ENCODE measurements at regions of chr2 and their contacts with region 1.

Region 1: GRCh38 chr2:237421542-237422116 is 7.7 kb upstream of the COL6A3 start:
- DNase-seq: peak; percentile 93
- H3K4me3 Mint-ChIP-seq: peak overlapping the region; percentile 74
- H3K27ac Mint-ChIP-seq: peak overlapping the region; percentile 75
- H3K4me1 Mint-ChIP-seq: peaks cover 31% of the 10 kb centered on the region
- H3K27me3 Mint-ChIP-seq: peaks cover 5% of the 10 kb centered on the region

Region 2: DNA sequence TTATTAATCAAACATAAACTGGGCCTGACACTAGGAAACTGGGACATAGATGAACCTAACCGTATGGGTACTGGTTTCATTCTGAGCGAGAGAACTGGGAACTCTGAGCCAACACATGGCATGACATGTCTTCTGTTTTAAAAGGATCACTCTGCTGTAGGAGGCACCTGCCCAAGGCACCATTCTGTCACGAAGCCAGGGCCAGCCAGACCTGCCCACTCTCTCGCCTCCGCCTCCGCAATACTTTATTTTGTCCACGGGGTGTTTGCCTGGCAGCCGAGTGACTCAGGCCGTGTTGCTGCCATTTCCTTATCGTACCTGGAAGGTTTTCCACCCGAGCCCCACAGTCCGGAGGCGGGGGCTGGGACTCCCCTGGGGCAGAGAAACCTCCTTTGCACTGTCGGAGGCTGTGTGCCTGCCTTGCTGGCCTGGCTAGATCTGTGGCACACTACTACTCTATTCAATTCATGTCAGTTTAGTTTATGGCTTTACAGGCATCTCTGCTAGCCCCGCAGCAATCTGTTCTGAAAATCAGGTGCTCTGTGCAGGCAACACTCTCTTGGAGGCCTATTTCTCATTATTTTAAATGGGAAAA is 972.4 kb before region 1 on chr2:
- intact Hi-C with region 1: no loop called
- DNase-seq: no peak
- H3K4me3 Mint-ChIP-seq: no peak overlapping the region
- H3K27ac Mint-ChIP-seq: no peak overlapping the region
- H3K4me1 Mint-ChIP-seq: no peaks in the 10 kb centered on the region
- H3K27me3 Mint-ChIP-seq: no peaks in the 10 kb centered on the region

Region 3: GRCh38 chr2:237456200-237456843 is 34.7 kb after region 1 on chr2:
- intact Hi-C with region 1: loop called (anchors 5 kb)
- DNase-seq: no peak
- H3K4me3 Mint-ChIP-seq: no peak overlapping the region
- H3K27ac Mint-ChIP-seq: no peak overlapping the region
- H3K4me1 Mint-ChIP-seq: peaks cover 29% of the 10 kb centered on the region
- H3K27me3 Mint-ChIP-seq: no peaks in the 10 kb centered on the region

Measured in activated CD4-positive, alpha-beta T cell treated with anti-CD3 and anti-CD28 coated beads, Interleukin-2, amount 10 ng/mL, durations not matched to agents 24 days and 14 days (primary cell).